ENCODE measurements at regions of chrX and their contacts with region 1.

Region 1: GRCh38 chrX:48911412-48912182 is at the start of gene SLC35A2:
- DNase-seq: peak; percentile 79
- H3K4me3 Mint-ChIP-seq: peak within 1 kb of the TSS; percentile 91
- H3K27ac Mint-ChIP-seq: peak within 1 kb of the TSS; percentile 99
- H3K4me1 Mint-ChIP-seq: peaks cover 17% of the 10 kb centered on the region
- H3K27me3 Mint-ChIP-seq: no peaks in the 10 kb centered on the region
- CTCF ChIP-seq: no peak
- total RNA-seq, gene SLC35A2: 38.6 and 43.5 TPM in 2 replicates

Region 2: GRCh38 chrX:48703642-48704481 is 207.7 kb before region 1 on chrX:
- CTCF ChIA-PET with region 1: no interaction called
- POLR2A ChIA-PET with region 1: no interaction called
- intact Hi-C with region 1: no loop called
- DNase-seq: peak; percentile 76
- H3K4me3 Mint-ChIP-seq: no peak overlapping the region
- H3K27ac Mint-ChIP-seq: peak overlapping the region; percentile 22
- H3K4me1 Mint-ChIP-seq: peaks cover 11% of the 10 kb centered on the region
- H3K27me3 Mint-ChIP-seq: no peaks in the 10 kb centered on the region
- CTCF ChIP-seq: no peak

Region 3: DNA sequence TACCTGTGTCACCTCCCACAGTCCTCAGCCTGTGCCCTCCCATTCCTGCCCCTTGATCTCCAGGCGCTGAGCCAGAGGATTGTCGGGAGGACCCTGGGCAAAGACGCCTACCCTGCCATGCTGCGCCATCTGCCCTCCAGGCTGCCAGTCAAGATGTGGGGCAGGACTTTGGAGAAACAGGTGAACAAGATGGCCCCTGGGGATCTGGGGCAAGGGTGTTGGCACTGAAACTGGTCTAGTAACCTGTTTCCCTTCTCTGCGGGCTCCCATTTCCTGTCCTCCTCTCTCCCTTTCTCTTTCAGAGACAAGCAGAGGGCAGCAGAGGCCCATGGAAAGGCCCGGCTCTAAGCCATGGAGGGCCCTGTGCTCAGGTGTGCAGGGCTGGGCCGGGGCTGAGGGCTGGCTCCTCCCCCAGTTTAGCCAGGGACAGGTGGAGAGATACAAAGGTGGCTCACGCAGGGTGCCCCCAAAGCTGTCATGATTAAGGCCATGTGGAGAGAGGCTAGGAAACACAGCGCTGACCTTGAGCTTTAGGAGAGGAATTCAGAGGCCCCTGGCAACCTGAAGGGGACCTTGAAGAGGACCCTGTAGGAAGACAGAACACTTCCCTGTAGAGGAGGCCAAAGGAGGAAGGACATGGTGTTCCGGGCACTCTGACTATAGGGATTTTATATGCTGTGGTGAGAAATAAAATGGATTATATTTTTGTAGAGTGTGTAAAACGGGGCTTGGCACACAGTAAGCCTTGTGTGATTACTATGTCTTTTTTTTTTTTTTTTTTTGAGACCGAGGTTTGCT is 149.7 kb before region 1 on chrX and contains the start of gene GLOD5:
- CTCF ChIA-PET with region 1: interaction called, 4 read pairs
- POLR2A ChIA-PET with region 1: no interaction called
- intact Hi-C with region 1: loop called (anchors 5 kb)
- DNase-seq: peak; percentile 69
- H3K4me3 Mint-ChIP-seq: no peak within 1 kb of the TSS
- H3K27ac Mint-ChIP-seq: peak within 1 kb of the TSS; percentile 65
- H3K4me1 Mint-ChIP-seq: no peaks in the 10 kb centered on the region
- H3K27me3 Mint-ChIP-seq: peaks cover 11% of the 10 kb centered on the region
- CTCF ChIP-seq: peak; percentile 17
- total RNA-seq, gene GLOD5: not detected in 2 replicates

Region 4: GRCh38 chrX:48864210-48864609 is 47.4 kb before region 1 on chrX:
- CTCF ChIA-PET with region 1: no interaction called
- POLR2A ChIA-PET with region 1: interaction called, 6 read pairs
- intact Hi-C with region 1: loop called (anchors 5 kb)
- DNase-seq: peak; percentile 14
- H3K4me3 Mint-ChIP-seq: no peak overlapping the region
- H3K27ac Mint-ChIP-seq: no peak overlapping the region
- H3K4me1 Mint-ChIP-seq: peaks cover 18% of the 10 kb centered on the region
- H3K27me3 Mint-ChIP-seq: no peaks in the 10 kb centered on the region
- CTCF ChIP-seq: no peak